Mammary epithelial cell (primary cell): ENCODE measurements at regions of chr18 and their contacts with region 1.

Region 1: GRCh38 chr18:22913857-22914256 is 19.3 kb upstream of the RBBP8 start:
- DNase-seq: peak; percentile 96
- H3K4me3 ChIP-seq: peak overlapping the region; percentile 41 to 99 (median 83)
- H3K27ac ChIP-seq: peak overlapping the region; percentile 83
- H3K4me1 ChIP-seq: peaks cover 26% of the 10 kb centered on the region
- H3K27me3 ChIP-seq: no peaks in the 10 kb centered on the region
- CTCF ChIP-seq: no peak

Region 2: DNA sequence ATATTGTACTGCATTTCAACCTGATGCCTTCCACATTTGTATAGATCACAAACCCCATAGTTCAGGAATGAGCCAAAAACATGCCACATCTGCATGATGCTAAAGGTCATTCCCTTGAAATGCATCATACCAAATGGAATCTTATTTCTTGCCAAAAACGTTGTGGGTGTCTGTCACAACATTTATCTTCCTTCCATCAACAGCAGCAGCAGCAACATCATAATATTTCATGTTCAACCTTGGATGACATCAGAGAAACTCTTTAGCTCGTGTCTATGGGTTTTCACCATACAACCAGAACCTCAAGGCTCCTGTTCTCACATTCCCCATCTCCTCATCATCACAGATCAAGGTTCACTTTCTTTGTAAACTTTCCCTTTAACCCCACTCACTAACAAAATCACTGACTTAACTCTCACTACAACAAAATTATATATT is 274.8 kb before region 1 on chr18:
- CTCF ChIA-PET with region 1: no interaction called
- dilution Hi-C with region 1: no loop called
- in situ Hi-C with region 1: no loop called
- intact Hi-C with region 1: no loop called
- DNase-seq: peak; percentile 69
- H3K4me3 ChIP-seq: no peak overlapping the region
- H3K27ac ChIP-seq: no peak overlapping the region
- H3K4me1 ChIP-seq: peaks cover 7% of the 10 kb centered on the region
- H3K27me3 ChIP-seq: peaks cover 2% of the 10 kb centered on the region
- CTCF ChIP-seq: no peak

Region 3: GRCh38 chr18:22800551-22800951 is 113.3 kb before region 1 on chr18:
- CTCF ChIA-PET with region 1: interaction called, 12 read pairs
- dilution Hi-C with region 1: no loop called
- in situ Hi-C with region 1: no loop called
- intact Hi-C with region 1: no loop called
- DNase-seq: no peak
- H3K4me3 ChIP-seq: no peak overlapping the region
- H3K27ac ChIP-seq: no peak overlapping the region
- H3K4me1 ChIP-seq: peaks cover 6% of the 10 kb centered on the region
- H3K27me3 ChIP-seq: no peaks in the 10 kb centered on the region
- CTCF ChIP-seq: no peak

Region 4: DNA sequence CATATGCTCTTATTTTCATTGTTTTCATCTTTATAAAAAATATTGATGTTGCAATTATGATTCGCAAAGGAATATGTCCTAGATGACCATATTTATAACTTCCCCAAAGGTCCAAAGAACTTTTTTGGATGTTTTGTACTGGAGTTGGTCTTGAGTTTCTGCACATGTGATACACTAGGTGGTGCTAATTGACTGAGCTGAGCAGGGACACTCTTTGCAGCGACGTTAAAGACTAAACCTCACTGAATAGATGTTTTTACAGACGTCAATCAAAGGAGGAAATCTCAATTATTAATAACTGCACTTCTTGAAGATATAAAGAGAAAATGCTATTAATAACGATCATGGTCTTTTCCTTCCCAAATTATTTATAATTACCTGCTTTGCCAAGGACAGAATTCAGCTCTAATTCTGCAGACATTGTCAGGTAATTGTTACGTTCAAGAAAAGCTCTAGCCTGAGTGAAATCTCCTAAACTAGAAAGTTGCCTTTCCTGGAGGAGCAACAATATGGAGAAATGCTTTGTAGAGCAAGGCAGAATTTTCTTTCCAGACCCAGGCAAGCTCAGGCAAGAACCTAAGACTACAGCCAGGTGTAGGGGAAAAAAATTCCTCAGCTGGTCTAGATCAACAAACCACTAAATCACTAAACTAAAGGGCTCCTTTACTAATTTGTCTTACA is 100.1 kb before region 1 on chr18:
- CTCF ChIA-PET with region 1: no interaction called
- dilution Hi-C with region 1: no loop called
- in situ Hi-C with region 1: no loop called
- intact Hi-C with region 1: loop called (anchors 1 kb)
- DNase-seq: peak; percentile 60
- H3K4me3 ChIP-seq: peak overlapping the region in 2 of 3 experiments; percentile 17 to 25
- H3K27ac ChIP-seq: peak overlapping the region; percentile 68
- H3K4me1 ChIP-seq: peaks cover 30% of the 10 kb centered on the region
- H3K27me3 ChIP-seq: no peaks in the 10 kb centered on the region
- CTCF ChIP-seq: peak; percentile 77 to 81

Region 5: DNA sequence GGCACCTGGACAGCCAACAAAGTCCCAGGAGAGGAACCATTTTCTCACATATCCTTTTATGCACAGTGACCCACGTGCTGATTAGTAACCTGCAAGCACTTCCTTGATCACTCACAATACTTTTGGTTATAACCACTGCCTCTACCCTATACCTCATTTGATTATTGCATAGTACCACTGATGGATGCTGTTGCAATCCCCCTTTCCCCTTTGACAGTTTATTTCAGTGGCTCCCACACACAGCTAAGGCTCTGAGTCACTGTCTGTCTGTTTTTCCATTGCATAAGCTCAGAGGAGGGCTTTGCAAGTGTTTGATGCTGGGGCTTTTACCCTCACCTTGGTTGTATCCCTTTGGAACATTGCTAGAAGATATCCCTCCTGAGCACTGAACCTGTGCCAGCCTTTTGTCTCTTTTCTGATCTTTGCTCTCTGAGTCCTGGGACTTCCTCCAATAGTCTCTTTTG is 82.4 kb before region 1 on chr18:
- CTCF ChIA-PET with region 1: interaction called, 3 read pairs
- dilution Hi-C with region 1: no loop called
- in situ Hi-C with region 1: no loop called
- intact Hi-C with region 1: loop called (anchors 1 kb)
- DNase-seq: peak; percentile 87
- H3K4me3 ChIP-seq: no peak overlapping the region
- H3K27ac ChIP-seq: peak overlapping the region; percentile 68
- H3K4me1 ChIP-seq: peaks cover 38% of the 10 kb centered on the region
- H3K27me3 ChIP-seq: no peaks in the 10 kb centered on the region
- CTCF ChIP-seq: no peak

Region 6: GRCh38 chr18:22856870-22857269 is 57.0 kb before region 1 on chr18:
- CTCF ChIA-PET with region 1: no interaction called
- dilution Hi-C with region 1: loop called (anchors 5 kb)
- in situ Hi-C with region 1: no loop called
- intact Hi-C with region 1: loop called (anchors 1 kb)
- DNase-seq: peak; percentile 96
- H3K4me3 ChIP-seq: no peak overlapping the region
- H3K27ac ChIP-seq: peak overlapping the region; percentile 96
- H3K4me1 ChIP-seq: peaks cover 26% of the 10 kb centered on the region
- H3K27me3 ChIP-seq: no peaks in the 10 kb centered on the region
- CTCF ChIP-seq: no peak

Region 7: DNA sequence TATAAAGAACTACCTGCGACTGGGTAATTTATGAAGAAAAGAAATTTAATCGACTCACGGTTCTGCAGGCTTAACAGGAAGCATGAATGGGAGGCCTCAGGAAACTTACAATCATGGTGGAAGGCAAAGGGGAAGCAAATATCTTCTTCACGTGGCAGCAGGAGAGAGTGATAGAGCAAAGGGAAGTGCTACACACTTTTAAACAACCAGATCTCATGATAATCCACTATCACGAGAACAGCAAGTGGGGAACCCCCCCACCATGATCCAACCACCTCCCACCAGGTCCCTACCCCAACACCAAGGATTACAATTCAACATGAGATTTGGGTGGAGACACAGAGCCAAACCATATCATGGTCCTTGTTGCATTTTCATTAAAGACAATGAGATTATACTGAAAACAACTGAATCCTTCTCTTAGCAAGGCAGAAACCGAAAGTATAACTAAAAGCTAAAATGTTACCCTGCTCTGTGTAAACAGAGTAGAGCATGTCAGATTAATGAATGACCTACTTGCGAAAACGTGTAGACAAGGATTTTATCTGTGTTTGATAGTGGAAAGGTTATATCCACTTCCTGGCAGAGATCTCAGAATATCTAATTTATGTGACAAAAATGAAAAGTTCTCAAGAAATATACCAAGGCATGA is 40.8 kb before region 1 on chr18:
- CTCF ChIA-PET with region 1: no interaction called
- dilution Hi-C with region 1: no loop called
- in situ Hi-C with region 1: no loop called
- intact Hi-C with region 1: loop called (anchors 1 kb)
- DNase-seq: no peak
- H3K4me3 ChIP-seq: no peak overlapping the region
- H3K27ac ChIP-seq: no peak overlapping the region
- H3K4me1 ChIP-seq: peaks cover 19% of the 10 kb centered on the region
- H3K27me3 ChIP-seq: no peaks in the 10 kb centered on the region
- CTCF ChIP-seq: no peak

Region 8: GRCh38 chr18:22933206-22933957 is 19.5 kb after region 1 on chr18 and contains the start of gene RBBP8:
- CTCF ChIA-PET with region 1: no interaction called
- dilution Hi-C with region 1: no loop called
- in situ Hi-C with region 1: no loop called
- intact Hi-C with region 1: loop called (anchors 1 kb)
- DNase-seq: peak; percentile 79
- H3K4me3 ChIP-seq: peak within 1 kb of the TSS; percentile 49 to 77 (median 66)
- H3K27ac ChIP-seq: peak within 1 kb of the TSS; percentile 95
- H3K4me1 ChIP-seq: peaks cover 36% of the 10 kb centered on the region
- H3K27me3 ChIP-seq: no peaks in the 10 kb centered on the region
- CTCF ChIP-seq: no peak
- total RNA-seq, gene RBBP8: 165 to 692 TPM